GM12878 (cell line): ENCODE measurements at regions of chr10 and their contacts with region 1.

Region 1: DNA sequence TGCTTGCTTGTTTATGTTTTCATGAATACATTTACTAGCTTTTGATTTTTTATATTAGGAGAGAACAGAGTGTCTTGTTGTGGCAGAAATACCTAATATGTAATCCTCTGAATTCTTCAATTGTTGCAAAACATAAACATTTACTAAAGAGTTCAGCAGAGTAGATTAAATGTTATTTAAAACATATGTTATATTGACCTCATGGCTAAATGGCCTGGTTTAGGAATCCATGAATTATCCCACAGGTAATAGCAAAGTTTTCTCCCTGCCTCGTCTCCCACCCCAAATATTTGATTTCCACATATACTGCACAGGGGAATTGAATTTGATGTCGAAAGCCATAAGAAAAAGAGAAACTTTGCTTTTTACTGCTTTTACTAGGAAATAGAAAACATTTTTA is 111.8 kb downstream of the ADK start:
- DNase-seq: no peak
- ATAC-seq: no peak
- H3K4me3 ChIP-seq: no peak overlapping the region
- H3K27ac ChIP-seq: no peak overlapping the region
- H3K4me1 ChIP-seq: no peaks in the 10 kb centered on the region
- H3K27me3 ChIP-seq: no peaks in the 10 kb centered on the region
- CTCF ChIP-seq: no peak
- EP300 ChIP-seq: no peak
- POLR2A ChIP-seq: no peak
- RAD21 ChIP-seq: no peak

Region 2: GRCh38 chr10:74275755-74276290 is 13.0 kb after region 1 on chr10:
- CTCF ChIA-PET with region 1: interaction called, 3 read pairs
- POLR2A ChIA-PET with region 1: no interaction called
- RAD21 ChIA-PET with region 1: interaction called, 5 read pairs
- SMC1A ChIA-PET with region 1: interaction called, 13 read pairs
- in situ Hi-C with region 1: no loop called
- intact Hi-C with region 1: no loop called
- DNase-seq: no peak
- ATAC-seq: no peak
- H3K4me3 ChIP-seq: no peak overlapping the region
- H3K27ac ChIP-seq: no peak overlapping the region
- H3K4me1 ChIP-seq: no peaks in the 10 kb centered on the region
- H3K27me3 ChIP-seq: no peaks in the 10 kb centered on the region
- CTCF ChIP-seq: no peak
- EP300 ChIP-seq: no peak
- POLR2A ChIP-seq: no peak
- RAD21 ChIP-seq: no peak

Region 3: GRCh38 chr10:74406006-74406405 is 143.2 kb after region 1 on chr10:
- CTCF ChIA-PET with region 1: no interaction called
- POLR2A ChIA-PET with region 1: no interaction called
- RAD21 ChIA-PET with region 1: no interaction called
- SMC1A ChIA-PET with region 1: no interaction called
- in situ Hi-C with region 1: no loop called
- intact Hi-C with region 1: no loop called
- DNase-seq: no peak
- ATAC-seq: peak; percentile 51; the same call in 2 of the 3 replicates
- H3K4me3 ChIP-seq: no peak overlapping the region
- H3K27ac ChIP-seq: no peak overlapping the region
- H3K4me1 ChIP-seq: no peaks in the 10 kb centered on the region
- H3K27me3 ChIP-seq: no peaks in the 10 kb centered on the region
- CTCF ChIP-seq: no peak
- EP300 ChIP-seq: no peak
- POLR2A ChIP-seq: no peak
- RAD21 ChIP-seq: no peak

Region 4: DNA sequence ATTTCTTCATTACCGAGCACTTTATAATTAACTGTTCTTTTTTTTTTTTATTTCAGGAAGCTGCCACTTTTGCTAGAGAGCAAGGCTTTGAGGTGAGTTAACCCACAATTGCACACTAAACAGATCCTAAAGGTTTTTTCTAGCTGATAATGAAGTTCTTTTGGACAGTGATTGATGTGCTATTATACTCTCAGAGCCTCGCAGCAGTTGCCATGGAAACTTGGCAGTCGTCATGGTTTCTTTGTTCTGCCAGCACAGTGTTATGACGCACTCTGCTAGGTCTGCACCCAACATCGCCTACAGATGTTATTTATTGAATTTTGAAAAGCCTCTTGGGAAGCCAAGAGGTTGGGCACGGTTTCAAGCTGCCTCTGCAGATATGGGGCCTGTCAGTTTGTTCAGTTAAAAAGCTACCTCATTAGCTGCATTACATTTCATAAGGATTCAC is 326.4 kb after region 1 on chr10:
- CTCF ChIA-PET with region 1: no interaction called
- POLR2A ChIA-PET with region 1: no interaction called
- RAD21 ChIA-PET with region 1: interaction called, 3 read pairs
- SMC1A ChIA-PET with region 1: interaction called, 3 read pairs
- in situ Hi-C with region 1: no loop called
- intact Hi-C with region 1: loop called (anchors 5 kb)
- DNase-seq: peak; percentile 82
- ATAC-seq: peak; percentile 75
- H3K4me3 ChIP-seq: no peak overlapping the region
- H3K27ac ChIP-seq: no peak overlapping the region
- H3K4me1 ChIP-seq: peaks cover 23% of the 10 kb centered on the region
- H3K27me3 ChIP-seq: no peaks in the 10 kb centered on the region
- CTCF ChIP-seq: no peak
- EP300 ChIP-seq: peak; percentile 80 to 92
- POLR2A ChIP-seq: no peak
- RAD21 ChIP-seq: no peak